PC-9 (cell line): ENCODE measurements at regions of chr6 and their contacts with region 1.

Region 1: DNA sequence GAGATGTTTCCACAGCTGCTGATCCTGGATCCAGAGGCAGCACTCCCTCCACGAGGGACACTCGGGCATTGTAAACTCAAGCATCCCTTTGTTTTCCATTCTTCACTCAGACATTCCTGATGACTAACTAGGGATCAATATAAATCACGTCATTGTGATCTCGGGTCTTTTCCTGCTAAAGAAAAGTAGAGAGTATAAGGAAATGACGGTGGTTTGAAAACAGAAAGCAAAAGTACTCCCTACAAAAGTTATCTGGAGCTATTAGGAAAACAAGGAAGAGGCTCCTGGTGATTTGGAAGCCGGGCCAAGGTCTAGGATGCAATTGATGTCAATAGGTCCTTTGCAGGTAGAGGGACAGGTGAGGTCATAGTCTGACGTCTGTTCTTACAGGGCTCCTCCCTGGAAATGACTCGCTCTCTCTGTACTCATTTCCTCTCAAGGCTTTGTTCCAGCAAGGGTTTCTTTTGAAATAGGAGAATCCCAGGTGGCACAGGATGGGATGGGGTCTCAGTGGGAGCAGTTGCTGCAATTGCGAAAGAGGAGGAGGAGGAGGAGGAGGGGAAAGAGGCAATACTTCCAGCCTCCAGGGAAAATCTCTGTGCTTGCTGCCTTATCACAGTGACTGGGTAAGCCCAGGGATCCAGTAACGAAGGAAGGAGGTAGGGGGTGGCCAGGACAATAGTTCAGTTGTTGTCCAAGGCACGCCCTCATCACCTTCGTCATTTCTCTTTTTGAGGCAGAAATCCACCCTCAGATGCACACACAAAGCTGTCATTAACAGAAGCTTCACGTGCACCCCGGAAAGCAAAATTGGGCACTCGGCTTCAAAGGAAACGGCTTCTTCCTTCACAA is 222.9 kb downstream of the LY86 start:
- DNase-seq: peak; percentile 72 to 93
- H3K4me3 ChIP-seq: peak overlapping the region; percentile 54
- H3K27ac ChIP-seq: peak overlapping the region; percentile 95
- H3K4me1 ChIP-seq: peaks cover 37% of the 10 kb centered on the region
- H3K27me3 ChIP-seq: no peaks in the 10 kb centered on the region
- CTCF ChIP-seq: no peak

Region 2: DNA sequence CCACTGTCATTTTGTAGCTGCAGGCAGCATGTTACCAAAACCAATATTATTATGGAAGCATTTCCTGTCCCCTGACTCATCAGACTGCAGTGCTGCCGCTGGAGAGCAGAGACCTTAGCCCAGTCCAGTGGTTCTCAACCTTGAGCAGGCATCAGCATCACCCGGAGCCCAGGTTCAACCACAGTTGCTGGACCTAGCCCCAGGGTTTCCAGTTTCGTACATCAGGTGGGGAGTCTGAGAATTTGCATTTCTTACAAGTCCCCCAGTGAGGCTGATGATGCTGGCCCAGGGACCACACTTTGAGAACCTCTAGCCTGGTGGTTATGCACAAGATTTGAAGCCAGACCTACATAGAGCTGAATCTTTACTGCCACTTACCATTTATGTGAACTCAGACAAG is 175.5 kb before region 1 on chr6:
- CTCF ChIA-PET with region 1: no interaction called
- POLR2A ChIA-PET with region 1: no interaction called
- intact Hi-C with region 1: no loop called
- DNase-seq: no peak
- H3K4me3 ChIP-seq: no peak overlapping the region
- H3K27ac ChIP-seq: no peak overlapping the region
- H3K4me1 ChIP-seq: no peaks in the 10 kb centered on the region
- H3K27me3 ChIP-seq: no peaks in the 10 kb centered on the region
- CTCF ChIP-seq: no peak

Region 3: DNA sequence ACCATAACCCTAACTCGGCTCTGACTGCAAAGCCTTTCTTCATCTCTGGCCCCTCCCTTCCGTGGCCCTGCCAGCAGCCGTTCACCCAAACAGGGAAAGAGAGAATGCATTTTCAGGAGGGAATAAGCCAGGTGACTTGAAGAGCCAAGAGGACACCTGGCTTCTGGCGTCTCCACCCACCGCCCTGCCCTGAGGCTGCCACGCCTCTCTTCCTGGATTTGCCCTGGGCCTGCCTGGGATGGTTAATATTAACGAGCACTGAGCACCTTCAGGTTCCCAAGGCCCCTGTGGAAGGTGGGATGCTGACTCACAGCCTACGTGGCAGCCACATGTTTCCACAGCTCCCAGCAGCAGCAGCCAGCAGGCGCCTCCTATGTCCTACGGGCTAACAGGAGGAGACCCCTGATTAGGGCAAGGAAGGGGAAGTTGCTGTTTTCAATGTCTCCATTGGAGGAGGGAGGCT is 158.4 kb after region 1 on chr6:
- CTCF ChIA-PET with region 1: interaction called, 3 read pairs
- POLR2A ChIA-PET with region 1: no interaction called
- intact Hi-C with region 1: loop called (anchors 5 kb)
- DNase-seq: peak; percentile 91 to 97
- H3K4me3 ChIP-seq: no peak overlapping the region
- H3K27ac ChIP-seq: peak overlapping the region; percentile 73
- H3K4me1 ChIP-seq: peaks cover 44% of the 10 kb centered on the region
- H3K27me3 ChIP-seq: no peaks in the 10 kb centered on the region
- CTCF ChIP-seq: no peak